Psoas muscle (tissue), 8 donors: ENCODE measurements at regions of chr2 and their contacts with region 1.

Region 1: DNA sequence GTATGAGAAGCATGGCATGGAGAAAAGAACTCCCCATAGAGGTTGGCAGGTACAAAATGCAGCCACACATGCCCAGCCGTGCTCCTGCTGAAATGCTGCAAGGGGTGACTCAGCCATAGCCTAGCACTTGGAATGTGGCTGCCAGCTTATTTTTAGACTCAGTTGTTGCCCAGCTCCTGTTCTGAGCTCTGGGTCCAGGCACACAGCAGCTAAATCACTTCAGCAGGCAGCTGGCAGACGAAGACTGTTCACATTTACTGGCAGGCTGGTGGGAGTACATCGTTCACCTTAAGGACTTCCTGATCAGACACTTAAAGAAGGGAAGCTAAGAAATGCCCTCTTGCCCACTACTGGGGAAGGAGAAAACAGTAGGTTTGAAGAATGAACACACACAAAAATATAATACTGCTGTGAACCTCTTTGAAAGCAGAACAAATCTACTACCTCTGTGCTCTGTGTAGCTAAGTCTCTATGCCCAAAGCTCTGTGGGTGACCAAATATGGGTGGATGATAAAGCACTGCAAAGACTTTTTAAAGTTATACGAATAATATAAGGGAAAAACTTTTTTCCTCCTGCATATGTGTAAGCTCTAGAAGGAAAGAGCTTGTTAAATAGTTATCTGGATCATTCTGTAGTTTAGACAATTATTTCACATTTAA is 146.1 kb downstream of the LNPK start:
- DNase-seq: peak; percentile 62 to 84
- ATAC-seq: peak; percentile 97 to 98 (median 98)
- H3K4me3 ChIP-seq: peak overlapping the region; percentile 21
- H3K27ac ChIP-seq: peak overlapping the region; percentile 88
- H3K4me1 ChIP-seq: peaks cover 29% of the 10 kb centered on the region
- H3K27me3 ChIP-seq: no peaks in the 10 kb centered on the region
- CTCF ChIP-seq: no peak

Region 2: GRCh38 chr2:174914853-174915760 is 940.8 kb before region 1 on chr2:
- intact Hi-C with region 1: no loop called
- DNase-seq: no peak
- ATAC-seq: no peak
- H3K4me3 ChIP-seq: no peak overlapping the region
- H3K27ac ChIP-seq: no peak overlapping the region
- H3K4me1 ChIP-seq: no peaks in the 10 kb centered on the region
- H3K27me3 ChIP-seq: no peaks in the 10 kb centered on the region
- CTCF ChIP-seq: no peak

Region 3: GRCh38 chr2:175750195-175750594 is 105.7 kb before region 1 on chr2:
- intact Hi-C with region 1: loop called in 1 of 2 experiments (anchors 5 kb)
- DNase-seq: no peak
- ATAC-seq: no peak
- H3K4me3 ChIP-seq: no peak overlapping the region
- H3K27ac ChIP-seq: no peak overlapping the region
- H3K4me1 ChIP-seq: peaks cover 12% of the 10 kb centered on the region
- H3K27me3 ChIP-seq: no peaks in the 10 kb centered on the region
- CTCF ChIP-seq: no peak

Region 4: GRCh38 chr2:175823002-175823706 is 32.8 kb before region 1 on chr2:
- intact Hi-C with region 1: no loop called
- DNase-seq: no peak
- ATAC-seq: peak; percentile 67 to 88 (median 78)
- H3K4me3 ChIP-seq: no peak overlapping the region
- H3K27ac ChIP-seq: peak overlapping the region; percentile 34
- H3K4me1 ChIP-seq: peaks cover 10% of the 10 kb centered on the region
- H3K27me3 ChIP-seq: no peaks in the 10 kb centered on the region
- CTCF ChIP-seq: no peak

Region 5: DNA sequence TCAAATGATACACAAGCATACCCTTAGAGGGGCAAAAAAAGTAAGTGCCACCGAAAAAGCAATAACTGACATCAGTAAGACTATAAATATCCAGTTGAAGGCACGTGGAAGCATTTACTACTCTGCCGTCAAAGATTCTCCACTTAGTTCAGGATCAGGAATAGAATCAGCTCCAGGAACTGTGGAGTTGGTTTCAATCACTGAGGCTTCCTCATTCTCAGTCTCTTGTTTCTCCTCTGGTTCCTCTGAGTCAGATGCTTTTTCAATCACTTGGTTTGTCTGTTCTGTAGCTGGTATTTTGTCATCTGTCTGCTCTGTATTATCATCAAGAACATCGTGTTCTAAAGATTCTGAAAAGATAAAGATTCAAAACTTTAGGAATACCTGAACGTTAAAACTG is 73.9 kb after region 1 on chr2:
- intact Hi-C with region 1: loop called in 1 of 2 experiments (anchors 2 kb)
- DNase-seq: no peak
- ATAC-seq: peak; percentile 95 to 96 (median 96)
- H3K4me3 ChIP-seq: no peak overlapping the region
- H3K27ac ChIP-seq: peak overlapping the region; percentile 85
- H3K4me1 ChIP-seq: peaks cover 54% of the 10 kb centered on the region
- H3K27me3 ChIP-seq: no peaks in the 10 kb centered on the region
- CTCF ChIP-seq: no peak

Region 6: DNA sequence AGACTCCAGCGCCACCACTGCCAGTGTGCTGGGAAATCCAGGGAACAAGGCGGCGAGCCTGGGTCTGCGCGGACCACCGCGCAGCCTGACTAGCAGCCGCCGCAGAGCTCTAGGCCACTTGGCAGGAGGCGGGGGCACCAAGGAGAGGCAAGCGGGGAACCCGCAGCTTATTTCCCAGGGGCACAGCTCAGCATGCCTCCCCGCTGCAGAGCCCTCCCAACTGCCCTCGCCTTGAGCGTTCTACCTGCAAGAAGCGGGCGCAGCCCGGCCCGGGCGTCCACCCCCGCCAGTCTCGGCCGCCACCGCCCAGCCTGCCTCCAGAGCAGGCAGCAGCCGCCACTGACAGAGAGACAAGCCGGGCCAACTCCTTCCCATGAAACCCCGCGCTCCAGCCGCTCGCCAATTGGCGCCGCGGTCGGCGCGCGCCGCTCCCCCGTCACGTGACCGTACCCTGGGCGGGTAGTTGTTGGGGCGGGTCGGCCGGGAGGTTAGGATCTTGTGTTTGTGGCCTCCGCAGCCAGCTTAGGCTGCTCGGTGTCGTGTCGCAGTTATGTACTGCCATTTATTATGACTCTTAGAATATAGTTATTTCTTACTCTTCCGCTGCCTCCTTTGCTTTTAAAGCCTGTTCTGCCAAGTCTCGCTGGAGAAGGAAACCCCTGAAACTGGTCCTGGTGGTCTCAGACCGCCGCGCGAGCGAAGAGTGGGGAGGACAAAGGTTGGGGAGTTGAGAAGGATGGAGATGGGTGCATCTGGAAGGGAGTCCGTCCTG is 146.2 kb after region 1 on chr2 and contains the start of gene LNPK:
- intact Hi-C with region 1: loop called (anchors 5 to 10 kb)
- DNase-seq: peak; percentile 93 to 97
- ATAC-seq: peak; percentile 91 to 95 (median 93)
- H3K4me3 ChIP-seq: peak within 1 kb of the TSS; percentile 91
- H3K27ac ChIP-seq: peak within 1 kb of the TSS; percentile 98
- H3K4me1 ChIP-seq: peaks cover 42% of the 10 kb centered on the region
- H3K27me3 ChIP-seq: no peaks in the 10 kb centered on the region
- CTCF ChIP-seq: no peak
- total RNA-seq, gene LNPK: 42.1 to 65.6 (median 51.4) TPM